Activated B cell treated with CpG ODN at 0.5 μM for 24 hours (primary cell): ENCODE measurements at regions of chr19 and their contacts with region 1.

Region 1: DNA sequence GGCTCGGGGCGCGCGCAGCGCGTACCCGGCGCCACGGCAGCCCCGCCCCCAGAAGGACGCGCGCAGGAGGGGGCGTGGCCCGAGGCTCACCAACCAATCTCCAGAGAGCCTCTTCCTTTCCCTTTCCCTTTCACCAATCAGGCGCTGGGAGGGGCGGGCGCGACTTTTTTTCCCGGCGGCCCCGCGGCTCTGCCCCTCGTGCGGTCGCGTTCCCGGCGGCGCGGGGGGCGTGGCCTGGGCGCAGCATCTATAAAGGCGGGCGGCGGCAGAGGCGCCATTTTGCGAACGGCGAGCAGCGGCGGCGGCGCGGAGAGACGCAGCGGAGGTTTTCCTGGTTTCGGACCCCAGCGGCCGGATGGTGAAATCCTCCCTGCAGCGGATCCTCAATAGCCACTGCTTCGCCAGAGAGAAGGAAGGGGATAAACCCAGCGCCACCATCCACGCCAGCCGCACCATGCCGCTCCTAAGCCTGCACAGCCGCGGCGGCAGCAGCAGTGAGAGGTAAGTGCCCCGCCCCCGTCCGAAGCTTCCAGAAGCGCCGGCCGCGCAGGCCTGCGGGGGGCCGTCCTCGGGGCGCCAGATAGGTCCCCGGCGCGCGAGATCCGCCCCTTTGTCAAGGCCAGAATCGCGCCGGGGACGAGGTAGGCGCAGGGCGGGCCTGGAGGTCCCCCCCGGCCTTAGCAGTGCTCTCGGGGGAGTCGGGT is 12.6 kb downstream of the PEAK3 start:
- DNase-seq: peak; percentile 100
- ATAC-seq: peak; percentile 67
- H3K4me3 Mint-ChIP-seq: peak overlapping the region; percentile 92
- H3K27ac Mint-ChIP-seq: peak overlapping the region; percentile 91
- H3K4me1 Mint-ChIP-seq: peaks cover 60% of the 10 kb centered on the region
- H3K27me3 Mint-ChIP-seq: no peaks in the 10 kb centered on the region
- CTCF ChIP-seq: no peak

Region 2: GRCh38 chr19:1470203-1471009 is 799.0 kb before region 1 on chr19:
- CTCF ChIA-PET with region 1: no interaction called
- POLR2A ChIA-PET with region 1: no interaction called
- intact Hi-C with region 1: no loop called
- DNase-seq: peak; percentile 57
- ATAC-seq: peak; percentile 69
- H3K4me3 Mint-ChIP-seq: peak overlapping the region; percentile 76
- H3K27ac Mint-ChIP-seq: no peak overlapping the region
- H3K4me1 Mint-ChIP-seq: peaks cover 25% of the 10 kb centered on the region
- H3K27me3 Mint-ChIP-seq: peaks cover 2% of the 10 kb centered on the region
- CTCF ChIP-seq: no peak

Region 3: GRCh38 chr19:2253106-2254053 is 16.0 kb before region 1 on chr19:
- CTCF ChIA-PET with region 1: interaction called, 17 read pairs
- POLR2A ChIA-PET with region 1: interaction called, 131 read pairs
- intact Hi-C with region 1: loop called (anchors 1 kb)
- DNase-seq: peak; percentile 59
- ATAC-seq: peak; percentile 29
- H3K4me3 Mint-ChIP-seq: peak overlapping the region; percentile 70
- H3K27ac Mint-ChIP-seq: no peak overlapping the region
- H3K4me1 Mint-ChIP-seq: peaks cover 49% of the 10 kb centered on the region
- H3K27me3 Mint-ChIP-seq: peaks cover 2% of the 10 kb centered on the region
- CTCF ChIP-seq: no peak

Region 4: GRCh38 chr19:2289714-2290435 is 20.5 kb after region 1 on chr19:
- CTCF ChIA-PET with region 1: interaction called, 13 read pairs
- POLR2A ChIA-PET with region 1: interaction called, 73 read pairs
- intact Hi-C with region 1: loop called (anchors 1 kb)
- DNase-seq: peak; percentile 69
- ATAC-seq: peak; percentile 69
- H3K4me3 Mint-ChIP-seq: peak overlapping the region; percentile 90
- H3K27ac Mint-ChIP-seq: peak overlapping the region; percentile 90
- H3K4me1 Mint-ChIP-seq: peaks cover 54% of the 10 kb centered on the region
- H3K27me3 Mint-ChIP-seq: no peaks in the 10 kb centered on the region
- CTCF ChIP-seq: no peak

Region 5: GRCh38 chr19:2315818-2316353 is 46.5 kb after region 1 on chr19:
- CTCF ChIA-PET with region 1: interaction called, 16 read pairs
- POLR2A ChIA-PET with region 1: interaction called, 10 read pairs
- intact Hi-C with region 1: no loop called
- DNase-seq: peak; percentile 54
- ATAC-seq: peak; percentile 74
- H3K4me3 Mint-ChIP-seq: peak overlapping the region; percentile 59
- H3K27ac Mint-ChIP-seq: peak overlapping the region; percentile 82
- H3K4me1 Mint-ChIP-seq: peaks cover 55% of the 10 kb centered on the region
- H3K27me3 Mint-ChIP-seq: no peaks in the 10 kb centered on the region
- CTCF ChIP-seq: no peak

Region 6: DNA sequence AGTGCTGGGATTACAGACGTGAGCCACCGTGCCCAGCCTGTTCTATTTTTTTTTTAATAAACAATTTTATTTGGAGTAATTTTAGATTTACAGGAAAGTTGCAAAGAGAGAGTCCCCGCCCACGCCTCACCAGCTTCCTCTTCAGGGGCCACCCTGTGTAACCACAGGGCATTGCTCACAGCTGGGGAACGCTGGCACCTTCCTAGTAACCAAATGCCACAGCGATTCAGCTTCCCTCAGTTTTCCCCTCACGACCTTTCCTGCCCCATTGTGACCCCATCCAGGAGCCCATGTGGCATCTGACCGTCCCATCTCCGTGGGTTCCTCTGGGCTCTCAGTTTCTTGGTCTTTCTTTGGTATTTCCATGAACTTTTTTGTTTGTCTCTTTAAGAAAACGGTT is 349.2 kb after region 1 on chr19:
- CTCF ChIA-PET with region 1: interaction called, 3 read pairs
- POLR2A ChIA-PET with region 1: interaction called, 12 read pairs
- intact Hi-C with region 1: no loop called
- DNase-seq: peak; percentile 59
- ATAC-seq: peak; percentile 26
- H3K4me3 Mint-ChIP-seq: peak overlapping the region; percentile 70
- H3K27ac Mint-ChIP-seq: peak overlapping the region; percentile 94
- H3K4me1 Mint-ChIP-seq: peaks cover 96% of the 10 kb centered on the region
- H3K27me3 Mint-ChIP-seq: no peaks in the 10 kb centered on the region
- CTCF ChIP-seq: no peak